K562 (cell line): ENCODE measurements at regions of chr2 and their contacts with region 1.

Region 1: GRCh38 chr2:157443795-157444640 is at the start of gene CYTIP:
- DNase-seq: peak in 1 of 4 experiments; percentile 8
- ATAC-seq: peak; percentile 65
- H3K4me3 ChIP-seq: no peak within 1 kb of the TSS
- H3K27ac ChIP-seq: no peak within 1 kb of the TSS
- H3K4me1 ChIP-seq: no peaks in the 10 kb centered on the region; a peak in 1 of 5 replicates
- H3K27me3 ChIP-seq: peaks cover 0 to 3% of the 10 kb centered on the region in 2 experiments; a peak in 1 of 5 replicates
- CTCF ChIP-seq: no peak
- EP300 ChIP-seq: no peak
- POLR2A ChIP-seq: no peak
- RAD21 ChIP-seq: no peak
- polyA plus RNA-seq, gene CYTIP: 0.10 to 0.35 TPM

Region 2: GRCh38 chr2:155965415-155966063 is 1478.5 kb before region 1 on chr2:
- CTCF ChIA-PET with region 1: no interaction called
- POLR2A ChIA-PET with region 1: no interaction called
- in situ Hi-C with region 1: no loop called
- intact Hi-C with region 1: loop called (anchors 10 kb)
- DNase-seq: peak in 2 of 4 experiments; percentile 3
- ATAC-seq: no peak
- H3K4me3 ChIP-seq: 0 out of 2 replicates have a peak overlapping the region, but pooled peaks have one; percentile 15
- H3K27ac ChIP-seq: no peak overlapping the region
- H3K4me1 ChIP-seq: no peaks in the 10 kb centered on the region
- H3K27me3 ChIP-seq: no peaks in the 10 kb centered on the region
- CTCF ChIP-seq: no peak
- EP300 ChIP-seq: no peak
- POLR2A ChIP-seq: no peak
- RAD21 ChIP-seq: no peak